Prostate gland (tissue), 2 donors: ENCODE measurements at regions of chr1 and their contacts with region 1.

Region 1: DNA sequence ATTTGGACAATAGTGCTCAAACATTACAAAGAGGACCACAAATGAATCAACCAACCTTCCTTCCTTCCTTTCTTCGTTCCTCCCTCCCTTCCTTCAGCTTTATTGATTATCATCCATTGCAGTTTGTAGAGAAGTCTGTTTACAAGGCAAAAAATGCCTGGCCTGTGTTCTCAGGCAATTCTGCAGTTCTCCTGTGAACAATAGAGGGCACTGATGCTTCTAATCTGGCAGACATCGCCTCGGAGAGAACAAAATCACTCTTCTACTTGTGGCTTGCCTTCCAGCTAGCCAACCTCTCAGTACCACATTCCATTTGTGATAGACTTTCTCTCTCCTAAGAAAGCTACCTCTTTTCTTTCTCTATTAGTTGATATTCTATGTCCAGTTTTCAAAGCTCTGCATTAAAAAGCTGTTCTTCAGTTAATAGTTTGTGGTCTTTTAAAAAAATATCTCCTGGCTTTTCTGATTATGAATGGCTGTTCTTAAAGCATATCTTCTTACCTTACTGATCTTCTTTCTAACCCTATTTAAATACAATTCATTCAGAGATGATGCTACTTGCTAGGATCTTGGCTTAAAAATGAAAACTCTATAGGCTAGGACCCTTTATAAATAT is 26.9 kb upstream of the ESRRG start:
- DNase-seq: peak; percentile 43
- H3K4me3 ChIP-seq: no peak overlapping the region
- H3K27ac ChIP-seq: no peak overlapping the region
- H3K4me1 ChIP-seq: no peaks in the 10 kb centered on the region
- H3K27me3 ChIP-seq: no peaks in the 10 kb centered on the region
- CTCF ChIP-seq: peak; percentile 28 to 61 (median 48)
- POLR2A ChIP-seq: no peak

Region 2: DNA sequence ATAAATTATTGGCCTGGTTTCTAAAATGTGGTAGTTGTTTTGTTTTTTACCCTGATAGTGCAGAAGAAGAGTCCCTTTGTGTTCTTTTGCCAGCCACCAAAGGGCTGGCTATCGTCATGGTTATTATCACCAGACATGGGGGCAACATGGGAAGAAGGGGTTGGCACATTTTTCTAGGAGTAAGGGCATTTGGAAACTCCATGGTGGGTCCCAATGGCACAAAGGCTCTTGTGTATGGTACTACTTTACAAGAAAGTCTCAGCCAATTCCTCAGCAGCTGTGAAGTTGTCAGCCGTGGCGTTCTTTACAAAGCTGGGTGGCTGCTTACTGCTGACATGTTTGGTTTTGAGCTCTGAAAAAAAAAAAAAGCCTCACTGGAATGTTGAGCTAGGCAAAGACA is 303.6 kb after region 1 on chr1:
- intact Hi-C with region 1: no loop called
- DNase-seq: no peak
- H3K4me3 ChIP-seq: no peak overlapping the region
- H3K27ac ChIP-seq: no peak overlapping the region
- H3K4me1 ChIP-seq: no peaks in the 10 kb centered on the region
- H3K27me3 ChIP-seq: no peaks in the 10 kb centered on the region
- CTCF ChIP-seq: no peak
- POLR2A ChIP-seq: no peak

Region 3: GRCh38 chr1:217089361-217090014 is 339.4 kb after region 1 on chr1:
- intact Hi-C with region 1: loop called (anchors 10 kb)
- DNase-seq: peak; percentile 51
- H3K4me3 ChIP-seq: peak overlapping the region; percentile 54 to 56
- H3K27ac ChIP-seq: peak overlapping the region; percentile 67 to 78
- H3K4me1 ChIP-seq: no peaks in the 10 kb centered on the region
- H3K27me3 ChIP-seq: no peaks in the 10 kb centered on the region
- CTCF ChIP-seq: no peak
- POLR2A ChIP-seq: no peak

Region 4: GRCh38 chr1:217333939-217334338 is 583.8 kb after region 1 on chr1:
- intact Hi-C with region 1: loop called (anchors 5 kb)
- DNase-seq: no peak
- H3K4me3 ChIP-seq: no peak overlapping the region
- H3K27ac ChIP-seq: no peak overlapping the region
- H3K4me1 ChIP-seq: no peaks in the 10 kb centered on the region
- H3K27me3 ChIP-seq: no peaks in the 10 kb centered on the region
- CTCF ChIP-seq: no peak
- POLR2A ChIP-seq: no peak